CD4-positive, alpha-beta T cell (primary cell): ENCODE measurements at regions of chr5 and their contacts with region 1.

Region 1: DNA sequence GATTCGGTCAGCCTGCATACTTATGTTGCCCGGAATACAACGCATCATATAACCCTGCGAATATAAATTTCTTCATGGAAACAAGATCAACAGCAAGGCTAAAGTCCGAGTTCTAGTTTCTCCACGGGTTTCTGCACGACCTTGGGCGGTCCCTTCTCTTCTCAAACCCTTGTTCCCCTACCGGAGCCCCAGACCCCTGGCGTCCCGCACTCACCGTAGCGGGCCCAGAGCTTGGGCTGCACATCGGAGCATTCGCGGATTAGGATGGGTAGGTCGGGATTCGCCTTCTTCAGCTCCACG is 438 bp downstream of the NDUFA2 start:
- DNase-seq: no peak
- ATAC-seq: no peak
- H3K4me3 ChIP-seq: peak overlapping the region; percentile 96
- H3K4me3 Mint-ChIP-seq: peak overlapping the region; percentile 98
- H3K27ac ChIP-seq: peak overlapping the region; percentile 96 to 98
- H3K27ac Mint-ChIP-seq: peak overlapping the region; percentile 96
- H3K4me1 ChIP-seq: peaks cover 36% of the 10 kb centered on the region
- H3K4me1 Mint-ChIP-seq: peaks cover 57% of the 10 kb centered on the region
- H3K27me3 ChIP-seq: no peaks in the 10 kb centered on the region
- H3K27me3 Mint-ChIP-seq: no peaks in the 10 kb centered on the region
- CTCF ChIP-seq: no peak

Region 2: GRCh38 chr5:140408750-140409256 is 238.2 kb before region 1 on chr5:
- CTCF ChIA-PET with region 1: no interaction called
- POLR2A ChIA-PET with region 1: no interaction called
- intact Hi-C with region 1: no loop called
- DNase-seq: no peak
- ATAC-seq: no peak
- H3K4me3 ChIP-seq: no peak overlapping the region
- H3K4me3 Mint-ChIP-seq: peak overlapping the region; percentile 65
- H3K27ac ChIP-seq: no peak overlapping the region
- H3K27ac Mint-ChIP-seq: peak overlapping the region; percentile 63
- H3K4me1 ChIP-seq: peaks cover 41% of the 10 kb centered on the region
- H3K4me1 Mint-ChIP-seq: peaks cover 68% of the 10 kb centered on the region
- H3K27me3 ChIP-seq: no peaks in the 10 kb centered on the region
- H3K27me3 Mint-ChIP-seq: no peaks in the 10 kb centered on the region
- CTCF ChIP-seq: no peak

Region 3: GRCh38 chr5:140557136-140557805 is 89.7 kb before region 1 on chr5 and contains the start of gene SRA1:
- CTCF ChIA-PET with region 1: no interaction called
- POLR2A ChIA-PET with region 1: interaction called, 15 read pairs
- intact Hi-C with region 1: no loop called
- DNase-seq: peak; percentile 59 to 91 (median 76)
- ATAC-seq: peak; percentile 81
- H3K4me3 ChIP-seq: peak within 1 kb of the TSS; percentile 89
- H3K4me3 Mint-ChIP-seq: peak within 1 kb of the TSS; percentile 92
- H3K27ac ChIP-seq: peak within 1 kb of the TSS; percentile 90 to 94
- H3K27ac Mint-ChIP-seq: peak within 1 kb of the TSS; percentile 81
- H3K4me1 ChIP-seq: peaks cover 35% of the 10 kb centered on the region
- H3K4me1 Mint-ChIP-seq: peaks cover 52% of the 10 kb centered on the region
- H3K27me3 ChIP-seq: no peaks in the 10 kb centered on the region
- H3K27me3 Mint-ChIP-seq: no peaks in the 10 kb centered on the region
- CTCF ChIP-seq: no peak
- total RNA-seq, gene SRA1: 30.9 to 31.6 TPM

Region 4: DNA sequence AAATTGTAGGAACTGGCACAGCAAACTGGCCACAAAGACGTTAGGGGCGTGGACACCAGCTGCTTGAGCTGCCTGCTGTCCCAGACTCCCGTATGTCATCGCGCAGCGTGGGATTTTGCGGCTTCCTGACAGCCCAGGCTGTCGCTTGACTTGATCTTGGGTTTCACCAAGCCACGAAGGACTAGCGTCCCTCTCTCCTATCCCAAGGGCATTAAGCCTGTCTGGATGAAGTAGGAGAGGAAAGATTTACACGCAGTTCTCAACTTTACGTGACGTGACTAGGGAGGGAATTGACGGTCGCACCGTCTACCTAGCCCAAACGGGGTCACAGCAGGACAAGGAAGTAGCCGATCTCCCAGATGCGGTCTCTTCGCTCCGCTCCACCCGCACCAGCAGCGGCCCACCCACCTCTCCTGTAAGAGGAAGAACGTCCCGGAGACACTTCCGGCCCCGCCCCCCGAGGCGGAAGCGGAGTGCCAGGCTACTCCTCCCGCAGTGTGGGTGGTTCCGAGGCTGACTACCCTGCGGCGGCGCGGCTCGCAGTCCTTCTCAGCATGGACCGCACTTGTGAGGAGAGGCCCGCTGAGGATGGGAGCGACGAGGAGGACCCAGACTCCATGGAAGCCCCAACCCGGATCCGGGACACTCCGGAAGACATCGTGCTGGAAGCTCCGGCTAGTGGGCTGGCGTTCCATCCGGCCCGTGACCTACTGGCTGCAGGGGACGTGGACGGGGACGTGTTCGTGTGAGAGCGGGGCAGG is 17.5 kb after region 1 on chr5 and contains the start of gene WDR55:
- CTCF ChIA-PET with region 1: no interaction called
- POLR2A ChIA-PET with region 1: interaction called, 89 read pairs
- intact Hi-C with region 1: loop called (anchors 1 to 2 kb)
- DNase-seq: peak; percentile 90 to 98 (median 95)
- ATAC-seq: peak; percentile 92
- H3K4me3 ChIP-seq: peak within 1 kb of the TSS; percentile 98
- H3K4me3 Mint-ChIP-seq: peak within 1 kb of the TSS; percentile 91
- H3K27ac ChIP-seq: peak within 1 kb of the TSS; percentile 87 to 93
- H3K27ac Mint-ChIP-seq: peak within 1 kb of the TSS; percentile 98
- H3K4me1 ChIP-seq: peaks cover 26% of the 10 kb centered on the region
- H3K4me1 Mint-ChIP-seq: peaks cover 45% of the 10 kb centered on the region
- H3K27me3 ChIP-seq: no peaks in the 10 kb centered on the region
- H3K27me3 Mint-ChIP-seq: no peaks in the 10 kb centered on the region
- CTCF ChIP-seq: no peak
- total RNA-seq, gene WDR55: 40.1 to 42.9 TPM

Region 5: GRCh38 chr5:140700177-140701144 is 53.5 kb after region 1 on chr5 and contains the start of gene ZMAT2:
- CTCF ChIA-PET with region 1: interaction called, 3 read pairs
- POLR2A ChIA-PET with region 1: interaction called, 26 read pairs
- intact Hi-C with region 1: loop called in 1 of 2 experiments (anchors 2 kb)
- DNase-seq: peak; percentile 84 to 98 (median 90)
- ATAC-seq: peak; percentile 98
- H3K4me3 ChIP-seq: peak within 1 kb of the TSS; percentile 96
- H3K4me3 Mint-ChIP-seq: peak within 1 kb of the TSS; percentile 96
- H3K27ac ChIP-seq: peak within 1 kb of the TSS; percentile 64 to 90
- H3K27ac Mint-ChIP-seq: peak within 1 kb of the TSS; percentile 85
- H3K4me1 ChIP-seq: peaks cover 13% of the 10 kb centered on the region
- H3K4me1 Mint-ChIP-seq: peaks cover 31% of the 10 kb centered on the region
- H3K27me3 ChIP-seq: no peaks in the 10 kb centered on the region
- H3K27me3 Mint-ChIP-seq: no peaks in the 10 kb centered on the region
- CTCF ChIP-seq: no peak
- total RNA-seq, gene ZMAT2: 29.0 to 32.3 TPM